ENCODE measurements at regions of chr3 and their contacts with region 1.

Region 1: GRCh38 chr3:72938471-72939265 is 50.8 kb downstream of the GXYLT2 start:
- DNase-seq: peak; percentile 91
- H3K4me3 ChIP-seq: no peak overlapping the region
- CTCF ChIP-seq: peak; percentile 44

Region 2: GRCh38 chr3:72951259-72951722 is 12.6 kb after region 1 on chr3:
- CTCF ChIA-PET with region 1: interaction called, 13 read pairs
- POLR2A ChIA-PET with region 1: no interaction called
- DNase-seq: no peak
- H3K4me3 ChIP-seq: no peak overlapping the region
- CTCF ChIP-seq: no peak